ENCODE measurements at regions of chr2 and their contacts with region 1.

Region 1: GRCh38 chr2:160109936-160110673 is 47.7 kb upstream of the PLA2R1 start:
- DNase-seq: peak; percentile 60
- ATAC-seq: peak; percentile 91 to 94

Region 2: GRCh38 chr2:160194946-160195345 is 84.8 kb after region 1 on chr2:
- intact Hi-C with region 1: no loop called
- DNase-seq: no peak
- ATAC-seq: no peak

Region 3: GRCh38 chr2:160324161-160324800 is 214.2 kb after region 1 on chr2:
- intact Hi-C with region 1: loop called in 1 of 2 experiments (anchors 5 kb)
- DNase-seq: peak; percentile 60
- ATAC-seq: peak; percentile 27 to 40

Region 4: GRCh38 chr2:160994141-160995002 is 884.3 kb after region 1 on chr2:
- intact Hi-C with region 1: loop called in 1 of 2 experiments (anchors 2 kb)
- DNase-seq: peak; percentile 41
- ATAC-seq: peak; percentile 88 to 91